ENCODE measurements at regions of chr5 and their contacts with region 1.

Region 1: DNA sequence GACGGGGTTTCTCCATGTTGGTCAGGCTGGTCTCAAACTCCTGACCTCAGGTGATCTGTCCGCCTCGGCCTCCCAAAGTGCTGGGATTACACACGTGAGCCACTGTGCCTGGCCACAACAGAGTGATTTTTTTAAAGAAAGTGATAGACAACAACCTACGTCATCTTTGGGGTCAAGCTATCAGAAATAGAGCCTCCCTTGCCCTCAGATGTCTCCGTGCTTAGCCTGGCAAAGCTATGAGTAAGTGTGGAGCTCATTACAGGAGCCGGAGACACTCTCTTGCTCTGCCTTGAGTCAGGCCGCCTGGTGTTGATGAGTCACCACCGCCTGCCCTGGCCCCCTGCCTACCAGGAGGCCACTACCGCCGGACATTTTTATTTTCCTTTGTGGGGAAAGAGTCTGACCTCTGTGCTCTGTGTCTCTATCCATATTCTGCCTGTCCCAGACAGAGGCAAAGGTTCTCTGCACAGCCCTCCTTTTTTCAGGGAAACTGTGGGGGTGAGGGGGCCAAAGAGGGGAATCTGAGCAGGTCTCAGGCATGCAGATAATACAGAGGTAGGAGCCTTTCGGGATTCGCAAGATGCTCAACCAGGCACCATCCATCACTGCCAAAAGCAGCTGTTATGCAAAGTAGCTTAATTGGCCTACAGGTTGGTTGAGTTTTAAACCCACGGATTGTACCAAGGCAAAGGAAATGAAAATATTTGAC is 123.7 kb upstream of the CPEB4 start:
- DNase-seq: peak; percentile 79
- ATAC-seq: peak; percentile 24 to 82 (median 66)
- H3K4me3 ChIP-seq: no peak overlapping the region
- H3K27ac ChIP-seq: peak overlapping the region; percentile 2 to 91 (median 76)
- H3K4me1 ChIP-seq: peaks cover 0 to 58% (median 26%) of the 10 kb centered on the region in 9 donors
- H3K27me3 ChIP-seq: no peaks in the 10 kb centered on the region
- CTCF ChIP-seq: no peak

Region 2: DNA sequence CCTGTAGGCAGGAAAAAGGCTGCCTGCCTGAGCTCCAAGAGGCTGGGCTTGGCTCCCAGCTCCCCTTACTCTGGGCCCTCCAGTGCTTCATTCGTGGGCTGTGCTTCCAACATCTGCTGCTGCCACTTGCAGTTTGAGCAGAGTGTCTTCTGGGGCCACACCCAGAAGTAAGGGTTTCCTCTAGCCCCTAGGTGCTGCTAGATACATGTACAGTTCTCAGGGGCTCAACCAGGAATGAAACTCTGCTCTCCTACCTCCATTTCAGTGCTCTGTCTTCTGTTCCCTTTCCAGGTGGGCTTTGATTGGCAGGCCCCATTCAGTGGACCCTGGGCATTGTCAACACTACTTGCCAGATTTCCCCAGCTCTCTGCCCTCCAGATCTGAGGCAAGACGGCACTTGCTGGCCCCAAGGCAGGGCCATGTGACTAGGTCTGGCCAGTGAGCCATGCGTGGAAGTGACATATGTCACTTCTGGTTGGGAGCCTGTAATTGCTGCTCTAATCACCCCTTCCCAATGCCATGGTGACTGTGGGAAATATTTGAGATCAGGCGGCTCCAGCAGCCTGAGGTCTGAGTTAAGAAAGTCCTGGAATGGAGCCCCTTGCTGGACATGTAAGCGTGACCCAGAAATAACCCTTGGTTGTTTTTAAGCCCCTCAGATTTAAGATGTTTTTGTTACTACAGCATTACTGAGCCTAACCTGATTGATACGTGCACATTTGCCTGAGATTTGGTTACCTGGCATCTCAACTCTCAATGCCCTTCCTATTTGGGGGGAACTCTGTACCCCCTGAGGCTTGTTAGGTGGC is 138.6 kb before region 1 on chr5:
- intact Hi-C with region 1: loop called in 6 of 10 experiments (anchors 5 to 10 kb)
- DNase-seq: no peak
- ATAC-seq: peak; percentile 44 to 82 (median 62)
- H3K4me3 ChIP-seq: no peak overlapping the region
- H3K27ac ChIP-seq: peak overlapping the region in 2 of 10 donors; percentile 15 to 16
- H3K4me1 ChIP-seq: peaks cover 0 to 16% (median 9%) of the 10 kb centered on the region in 9 donors
- H3K27me3 ChIP-seq: no peaks in the 10 kb centered on the region
- CTCF ChIP-seq: peak in 5 of 9 donors; percentile 13 to 48 (median 39)

Region 3: GRCh38 chr5:173864126-173865050 is 99.9 kb after region 1 on chr5:
- intact Hi-C with region 1: loop called in 1 of 10 experiments (anchors 5 kb)
- DNase-seq: peak in 1 of 2 donors; percentile 18
- ATAC-seq: no peak
- H3K4me3 ChIP-seq: no peak overlapping the region
- H3K27ac ChIP-seq: peak overlapping the region in 2 of 10 donors; percentile 13 to 71
- H3K4me1 ChIP-seq: peaks cover 0 to 57% (median 5%) of the 10 kb centered on the region in 9 donors
- H3K27me3 ChIP-seq: no peaks in the 10 kb centered on the region
- CTCF ChIP-seq: no peak

Region 4: GRCh38 chr5:173925448-173926071 is 161.1 kb after region 1 on chr5:
- intact Hi-C with region 1: loop called in 1 of 10 experiments (anchors 10 kb)
- DNase-seq: peak; percentile 30 to 41
- ATAC-seq: peak in 1 of 8 donors; percentile 46
- H3K4me3 ChIP-seq: no peak overlapping the region
- H3K27ac ChIP-seq: peak overlapping the region in 9 of 10 donors; percentile 45 to 91 (median 85)
- H3K4me1 ChIP-seq: peaks cover 9 to 100% (median 82%) of the 10 kb centered on the region in 9 donors
- H3K27me3 ChIP-seq: no peaks in the 10 kb centered on the region
- CTCF ChIP-seq: peak in 7 of 9 donors; percentile 37 to 70 (median 58)

Region 5: GRCh38 chr5:173954671-173955521 is 190.4 kb after region 1 on chr5:
- intact Hi-C with region 1: loop called in 2 of 10 experiments (anchors 5 to 10 kb)
- DNase-seq: peak in 1 of 2 donors; percentile 21
- ATAC-seq: peak; percentile 74 to 93 (median 90)
- H3K4me3 ChIP-seq: no peak overlapping the region
- H3K27ac ChIP-seq: peak overlapping the region; percentile 60 to 86 (median 76)
- H3K4me1 ChIP-seq: peaks cover 0 to 64% (median 22%) of the 10 kb centered on the region in 9 donors
- H3K27me3 ChIP-seq: no peaks in the 10 kb centered on the region
- CTCF ChIP-seq: no peak

Region 6: DNA sequence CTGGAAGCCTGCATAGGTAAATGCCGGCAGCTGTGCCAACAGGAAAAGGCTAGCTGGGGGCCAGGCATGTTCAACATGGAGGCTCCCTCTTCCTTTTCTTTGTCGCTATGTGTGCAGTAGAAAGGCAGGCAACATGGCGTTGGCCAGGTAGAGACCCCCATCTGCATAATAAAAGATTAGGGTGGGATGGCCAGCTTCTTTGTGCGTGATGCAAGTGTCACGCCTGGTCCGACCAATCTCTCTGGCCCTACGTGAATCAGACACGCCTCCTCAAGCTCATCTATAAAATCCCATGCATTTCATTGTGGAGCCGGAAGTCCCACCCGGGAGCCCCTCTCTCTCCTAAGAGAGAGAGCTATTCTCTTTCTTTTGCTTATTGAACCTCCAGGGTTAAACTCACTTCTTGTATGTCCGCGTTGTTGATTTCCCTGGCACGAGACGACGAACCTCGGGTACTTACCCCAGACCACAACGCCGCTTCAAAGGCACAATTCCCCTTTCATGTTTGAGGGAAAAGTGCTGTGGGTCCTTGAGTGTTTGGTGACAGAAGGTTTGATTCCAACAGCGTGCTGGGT is 199.5 kb after region 1 on chr5:
- intact Hi-C with region 1: loop called in 2 of 10 experiments (anchors 5 to 10 kb)
- DNase-seq: no peak
- ATAC-seq: peak in 5 of 8 donors; percentile 16 to 41 (median 32)
- H3K4me3 ChIP-seq: no peak overlapping the region
- H3K27ac ChIP-seq: peak overlapping the region in 8 of 10 donors; percentile 23 to 69 (median 46)
- H3K4me1 ChIP-seq: peaks cover 0 to 31% (median 13%) of the 10 kb centered on the region in 9 donors
- H3K27me3 ChIP-seq: no peaks in the 10 kb centered on the region
- CTCF ChIP-seq: no peak

Measured in heart right ventricle (tissue), 16 donors.